Mammary epithelial cell (primary cell): ENCODE measurements at regions of chr3 and their contacts with region 1.

Region 1: GRCh38 chr3:186268616-186269448 is 93.2 kb downstream of the DGKG start:
- DNase-seq: no peak
- H3K4me3 ChIP-seq: no peak overlapping the region
- H3K27ac ChIP-seq: no peak overlapping the region
- H3K4me1 ChIP-seq: no peaks in the 10 kb centered on the region
- H3K27me3 ChIP-seq: no peaks in the 10 kb centered on the region
- CTCF ChIP-seq: no peak

Region 2: DNA sequence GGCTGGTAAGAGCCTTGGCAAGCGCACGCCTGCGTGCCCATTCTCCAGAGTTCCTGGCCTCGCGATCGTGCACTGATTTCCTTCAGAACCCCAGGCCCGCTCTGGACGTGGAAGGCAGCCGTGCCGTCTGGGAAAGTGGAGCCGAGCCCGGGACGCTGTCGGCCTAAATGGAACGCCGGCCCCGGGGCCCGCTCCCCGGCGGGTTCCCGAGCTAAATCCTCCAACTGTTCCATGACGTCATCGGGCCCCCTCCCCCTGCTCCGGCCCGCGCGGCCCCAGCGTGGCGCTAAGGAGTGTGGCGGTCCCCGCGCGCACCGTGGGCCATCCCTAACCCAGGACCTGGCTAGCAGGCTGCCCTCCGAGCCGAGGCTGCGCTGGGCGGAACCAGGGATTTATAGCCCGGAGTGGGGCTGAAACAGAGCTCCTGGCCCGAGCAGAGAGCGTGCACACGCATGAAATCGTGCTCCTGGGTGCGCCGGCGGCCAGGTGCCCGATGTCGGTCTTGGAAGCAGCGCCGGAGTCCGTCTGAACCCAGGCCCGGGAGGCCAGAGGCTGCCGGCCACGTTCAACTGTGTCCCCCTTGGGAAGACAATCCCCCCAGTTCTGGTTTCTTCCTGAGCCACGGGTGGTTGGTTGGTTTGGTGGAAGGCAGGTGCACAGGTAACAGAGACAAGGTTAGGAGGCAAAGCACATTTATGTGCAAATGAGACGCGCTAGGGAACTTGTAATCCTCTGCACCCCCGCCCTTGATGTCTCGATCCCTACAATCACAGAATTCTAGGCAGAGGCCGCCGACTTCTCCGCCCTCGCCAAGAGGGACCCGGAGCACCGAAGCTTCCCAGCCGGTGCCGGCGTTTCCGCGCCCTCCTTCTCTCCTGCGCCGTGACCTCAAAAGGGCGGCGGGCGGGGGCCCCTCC is 75.0 kb before region 1 on chr3:
- CTCF ChIA-PET with region 1: no interaction called
- dilution Hi-C with region 1: no loop called
- in situ Hi-C with region 1: no loop called
- intact Hi-C with region 1: no loop called
- DNase-seq: no peak
- H3K4me3 ChIP-seq: no peak overlapping the region
- H3K27ac ChIP-seq: no peak overlapping the region
- H3K4me1 ChIP-seq: no peaks in the 10 kb centered on the region
- H3K27me3 ChIP-seq: no peaks in the 10 kb centered on the region
- CTCF ChIP-seq: no peak

Region 3: DNA sequence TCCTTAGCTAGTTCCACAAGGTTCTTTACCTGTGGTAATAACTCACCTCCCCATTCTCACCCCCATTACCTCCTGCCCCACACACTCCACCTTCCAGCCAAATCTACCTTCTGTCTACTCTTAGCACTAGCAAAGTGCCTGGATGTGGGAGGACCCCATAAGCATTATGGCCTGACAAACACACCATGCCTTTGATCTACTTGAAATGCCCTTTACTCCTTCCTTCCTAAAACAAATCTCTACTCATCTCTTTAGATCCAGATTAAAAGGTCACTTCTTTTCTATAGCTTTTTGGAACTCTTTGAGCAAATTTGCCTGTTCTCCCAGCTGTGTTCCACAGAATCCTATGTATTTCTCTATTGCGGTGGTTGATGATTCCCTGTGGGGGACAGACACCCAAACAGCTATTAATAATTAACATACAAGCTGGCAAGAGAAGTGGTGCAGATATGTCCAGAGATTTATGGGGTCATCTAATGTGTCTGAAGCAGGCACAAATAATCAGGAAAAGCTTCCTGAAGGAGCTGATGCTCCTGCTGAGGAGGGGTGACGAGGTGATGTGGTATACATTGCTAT is 59.2 kb after region 1 on chr3:
- CTCF ChIA-PET with region 1: no interaction called
- dilution Hi-C with region 1: loop called (anchors 5 kb)
- in situ Hi-C with region 1: no loop called
- intact Hi-C with region 1: no loop called
- DNase-seq: no peak
- H3K4me3 ChIP-seq: no peak overlapping the region
- H3K27ac ChIP-seq: no peak overlapping the region
- H3K4me1 ChIP-seq: no peaks in the 10 kb centered on the region
- H3K27me3 ChIP-seq: peaks cover 3% of the 10 kb centered on the region
- CTCF ChIP-seq: no peak

Region 4: DNA sequence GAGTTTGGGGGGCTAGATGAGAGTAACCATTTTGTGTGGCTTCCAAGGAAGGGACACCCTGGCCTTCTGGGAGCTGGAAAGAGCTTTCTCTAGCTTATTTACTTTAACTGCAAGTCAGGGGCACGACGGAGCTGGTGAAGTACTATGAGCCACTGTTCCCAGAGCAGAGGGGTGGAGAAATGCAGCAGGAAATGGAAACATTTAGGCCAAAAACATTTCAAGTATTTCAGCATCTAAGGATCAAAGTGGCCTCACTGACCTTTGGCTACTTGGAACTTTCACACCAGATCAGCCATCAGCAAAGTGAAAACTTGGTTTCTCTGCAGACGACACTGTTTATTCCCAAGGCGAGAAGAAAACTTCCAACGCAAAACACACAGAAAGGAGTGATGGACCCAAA is 85.3 kb after region 1 on chr3:
- CTCF ChIA-PET with region 1: no interaction called
- dilution Hi-C with region 1: no loop called
- in situ Hi-C with region 1: no loop called
- intact Hi-C with region 1: no loop called
- DNase-seq: no peak
- H3K4me3 ChIP-seq: no peak overlapping the region
- H3K27ac ChIP-seq: no peak overlapping the region
- H3K4me1 ChIP-seq: no peaks in the 10 kb centered on the region
- H3K27me3 ChIP-seq: no peaks in the 10 kb centered on the region
- CTCF ChIP-seq: no peak